ENCODE measurements at regions of chr11 and their contacts with region 1.

Region 1: DNA sequence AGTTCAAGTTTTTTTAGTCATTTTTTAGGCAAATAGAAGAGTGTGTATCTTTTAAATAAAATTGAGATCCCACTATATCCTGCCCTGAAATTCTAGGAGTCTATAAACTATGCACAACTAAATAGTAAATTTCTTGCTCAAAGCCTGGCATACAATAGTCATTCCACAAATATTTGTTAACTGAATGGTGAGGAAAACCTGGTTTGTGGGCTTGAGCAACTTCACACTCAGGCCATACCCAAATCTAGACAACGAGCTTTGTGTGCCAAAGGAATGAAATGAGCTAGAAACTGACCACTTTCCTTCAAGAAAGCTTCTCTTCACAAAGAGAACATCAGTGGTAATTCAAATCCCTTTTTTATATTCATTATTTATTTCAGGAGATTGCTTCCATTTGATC is 39.6 kb upstream of the AMOTL1 start:
- DNase-seq: no peak
- ATAC-seq: no peak

Region 2: DNA sequence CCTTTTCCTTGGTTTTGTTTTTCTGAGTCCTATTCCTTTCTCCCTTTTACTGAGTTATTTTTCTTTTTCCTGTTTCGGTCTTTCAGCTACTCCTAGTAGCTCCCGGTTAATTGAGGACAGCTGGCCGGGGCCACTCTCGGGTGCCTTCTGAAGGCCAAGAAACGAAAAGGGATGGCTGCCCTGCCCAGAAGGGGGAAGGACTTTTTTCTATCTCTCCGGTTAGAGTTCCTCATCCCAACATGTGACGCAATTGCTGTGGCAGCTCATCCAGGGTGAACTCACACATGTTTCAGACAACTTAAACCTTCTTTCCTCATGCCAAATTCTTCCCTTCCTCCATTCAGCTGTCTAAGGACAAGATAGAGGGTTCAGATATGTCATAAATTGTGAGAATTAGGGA is 77.8 kb before region 1 on chr11:
- intact Hi-C with region 1: loop called (anchors 10 kb)
- DNase-seq: peak; percentile 88
- ATAC-seq: peak; percentile 88

Measured in Right ventricle myocardium inferior (tissue), 1 donor.